ENCODE measurements at regions of chr10 and their contacts with region 1.

Region 1: GRCh38 chr10:119705434-119705831 is 20.4 kb upstream of the INPP5F start:
- DNase-seq: no peak
- H3K4me3 Mint-ChIP-seq: no peak overlapping the region
- H3K27ac Mint-ChIP-seq: peak overlapping the region; percentile 96
- H3K4me1 Mint-ChIP-seq: peaks cover 81% of the 10 kb centered on the region
- H3K27me3 Mint-ChIP-seq: no peaks in the 10 kb centered on the region

Region 2: GRCh38 chr10:119370111-119370741 is 335.2 kb before region 1 on chr10:
- CTCF ChIA-PET with region 1: no interaction called
- intact Hi-C with region 1: loop called (anchors 5 kb)
- DNase-seq: peak; percentile 15
- H3K4me3 Mint-ChIP-seq: no peak overlapping the region
- H3K27ac Mint-ChIP-seq: no peak overlapping the region
- H3K4me1 Mint-ChIP-seq: peaks cover 33% of the 10 kb centered on the region
- H3K27me3 Mint-ChIP-seq: no peaks in the 10 kb centered on the region

Region 3: GRCh38 chr10:119650692-119651513 is 54.5 kb before region 1 on chr10 and contains the start of gene BAG3:
- CTCF ChIA-PET with region 1: interaction called, 3 read pairs
- intact Hi-C with region 1: loop called (anchors 1 kb)
- DNase-seq: peak; percentile 82
- H3K4me3 Mint-ChIP-seq: peak within 1 kb of the TSS; percentile 97
- H3K27ac Mint-ChIP-seq: peak within 1 kb of the TSS; percentile 95
- H3K4me1 Mint-ChIP-seq: peaks cover 38% of the 10 kb centered on the region
- H3K27me3 Mint-ChIP-seq: no peaks in the 10 kb centered on the region
- total RNA-seq, gene BAG3: 20.9 to 24.3 TPM

Region 4: DNA sequence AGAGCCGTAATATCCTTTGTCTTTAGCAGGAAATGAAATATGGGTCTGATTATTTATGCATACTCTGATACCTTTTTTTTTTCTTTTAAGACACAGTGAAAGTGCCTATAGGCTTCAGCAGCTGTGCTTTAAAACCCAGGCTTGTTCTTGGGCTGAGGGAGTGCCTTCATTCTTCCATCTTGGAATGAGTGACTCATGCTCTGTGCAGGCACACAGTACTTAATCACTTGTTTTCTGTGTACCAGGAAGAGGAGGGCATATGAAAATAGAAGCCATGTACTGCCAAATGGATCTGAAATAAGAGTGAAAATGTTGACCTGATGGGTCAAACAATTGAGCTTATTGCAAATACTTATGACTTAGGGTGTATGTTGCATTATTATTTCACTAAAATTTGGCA is 32.4 kb after region 1 on chr10:
- CTCF ChIA-PET with region 1: interaction called, 3 read pairs
- intact Hi-C with region 1: loop called (anchors 1 kb)
- DNase-seq: peak; percentile 39
- H3K4me3 Mint-ChIP-seq: no peak overlapping the region
- H3K27ac Mint-ChIP-seq: peak overlapping the region; percentile 59
- H3K4me1 Mint-ChIP-seq: peaks cover 50% of the 10 kb centered on the region
- H3K27me3 Mint-ChIP-seq: no peaks in the 10 kb centered on the region

Region 5: GRCh38 chr10:119919826-119920225 is 214.4 kb after region 1 on chr10:
- CTCF ChIA-PET with region 1: no interaction called
- intact Hi-C with region 1: no loop called
- DNase-seq: no peak
- H3K4me3 Mint-ChIP-seq: no peak overlapping the region
- H3K27ac Mint-ChIP-seq: peak overlapping the region; percentile 42
- H3K4me1 Mint-ChIP-seq: peaks cover 13% of the 10 kb centered on the region
- H3K27me3 Mint-ChIP-seq: no peaks in the 10 kb centered on the region

Region 6: DNA sequence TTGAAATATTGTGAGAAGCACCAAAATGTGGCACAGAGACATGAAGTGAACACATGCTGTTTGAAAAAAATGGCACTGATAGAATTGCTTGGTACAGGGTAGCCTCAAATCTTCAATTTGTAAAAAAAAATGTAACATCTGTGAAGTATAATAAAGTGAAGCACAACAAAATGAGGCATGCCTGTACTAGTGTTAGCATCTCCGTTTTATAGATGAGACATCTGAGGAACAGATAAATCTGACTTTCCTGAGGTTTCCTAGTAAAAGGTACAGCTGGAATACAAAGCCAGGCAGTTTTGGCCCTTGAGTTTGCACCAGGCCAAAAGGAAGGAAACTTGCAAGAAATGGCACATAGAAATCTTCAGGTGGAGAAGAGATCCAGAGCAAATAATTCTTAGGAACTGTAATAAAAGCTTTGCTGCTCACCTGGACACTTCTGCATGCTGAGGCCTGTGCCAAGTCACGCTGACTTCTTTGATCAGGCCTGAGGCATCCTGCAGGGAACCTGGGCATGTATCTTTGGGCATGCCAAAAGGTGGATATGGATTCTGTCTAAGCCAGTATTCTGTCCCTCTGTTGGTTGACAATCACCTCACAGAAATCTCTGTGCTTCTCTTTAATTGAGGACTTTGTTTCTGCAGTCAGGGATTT is 500.1 kb after region 1 on chr10:
- CTCF ChIA-PET with region 1: no interaction called
- intact Hi-C with region 1: no loop called
- DNase-seq: no peak
- H3K4me3 Mint-ChIP-seq: no peak overlapping the region
- H3K27ac Mint-ChIP-seq: no peak overlapping the region
- H3K4me1 Mint-ChIP-seq: no peaks in the 10 kb centered on the region
- H3K27me3 Mint-ChIP-seq: no peaks in the 10 kb centered on the region